HEK293 (cell line): ENCODE measurements at regions of chr3 and their contacts with region 1.

Region 1: DNA sequence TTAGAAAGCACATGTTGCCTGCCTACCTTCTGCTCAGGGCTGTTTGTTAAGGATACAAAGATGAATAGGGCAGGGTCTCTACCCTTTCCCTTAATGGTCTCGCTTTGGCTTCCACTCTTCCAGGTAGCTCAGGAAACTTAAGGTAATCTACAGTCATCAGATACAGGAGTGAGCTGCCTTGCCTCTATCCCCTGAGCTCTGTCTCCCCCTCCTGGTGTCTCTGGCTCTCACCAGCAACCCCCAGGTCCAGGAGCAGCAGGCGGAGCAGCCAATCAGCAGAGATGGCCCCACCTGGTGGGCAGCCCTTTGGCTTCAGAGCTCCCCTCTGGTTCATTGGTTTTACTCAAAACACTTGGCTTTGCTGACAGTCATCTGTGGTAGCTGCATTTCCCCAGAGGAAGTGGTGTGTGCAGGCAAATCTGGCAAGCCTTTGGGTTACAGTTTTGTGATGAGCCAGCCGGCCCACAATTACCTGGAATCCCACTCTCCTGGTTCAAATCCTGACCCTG is 8.5 kb upstream of the CX3CR1 start:
- H3K4me3 ChIP-seq: no peak overlapping the region
- H3K27ac ChIP-seq: no peak overlapping the region
- H3K4me1 ChIP-seq: no peaks in the 10 kb centered on the region
- CTCF ChIP-seq: peak; percentile 82

Region 2: DNA sequence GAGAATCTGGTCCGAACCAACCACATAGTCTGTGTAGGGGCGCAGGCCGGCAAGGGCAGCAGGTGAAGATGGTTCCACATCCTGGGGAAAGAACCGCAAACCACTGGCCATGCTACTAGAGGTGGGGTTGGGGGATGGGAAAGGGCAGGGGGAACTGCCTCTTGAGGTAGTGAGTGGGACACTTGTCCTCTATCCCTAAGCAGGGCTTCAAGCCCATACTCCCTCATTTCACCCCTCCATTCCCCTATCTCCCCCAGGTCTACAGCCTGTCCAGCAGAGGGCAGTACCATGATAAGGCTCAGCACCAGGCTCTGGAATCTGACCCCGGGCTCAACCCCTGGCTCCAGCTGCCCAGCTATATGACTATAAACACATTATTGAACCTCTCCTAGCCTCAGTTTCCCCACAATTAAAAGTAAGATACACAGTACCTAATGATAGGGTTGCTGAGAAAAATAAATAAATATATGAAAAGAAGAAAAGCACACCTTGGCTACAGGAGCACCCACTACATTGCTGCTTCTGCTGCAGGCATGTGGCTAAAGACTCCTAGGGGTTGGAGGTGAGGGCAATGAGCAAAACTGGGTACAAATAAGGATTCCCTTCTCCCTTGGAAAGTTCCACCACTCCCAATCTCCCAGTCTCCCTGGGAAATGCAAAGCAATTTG is 187.2 kb before region 1 on chr3:
- CTCF ChIA-PET with region 1: interaction called, 11 read pairs
- POLR2A ChIA-PET with region 1: no interaction called
- H3K4me3 ChIP-seq: no peak overlapping the region
- H3K27ac ChIP-seq: no peak overlapping the region
- H3K4me1 ChIP-seq: no peaks in the 10 kb centered on the region
- CTCF ChIP-seq: peak; percentile 31; the same call in 1 of the 2 replicates

Region 3: GRCh38 chr3:39115870-39116269 is 172.5 kb before region 1 on chr3:
- CTCF ChIA-PET with region 1: interaction called, 10 read pairs
- POLR2A ChIA-PET with region 1: interaction called, 3 read pairs
- H3K4me3 ChIP-seq: no peak overlapping the region
- H3K27ac ChIP-seq: no peak overlapping the region
- H3K4me1 ChIP-seq: no peaks in the 10 kb centered on the region
- CTCF ChIP-seq: no peak

Region 4: GRCh38 chr3:39189959-39190269 is 98.4 kb before region 1 on chr3:
- CTCF ChIA-PET with region 1: interaction called, 311 read pairs
- POLR2A ChIA-PET with region 1: interaction called, 6 read pairs
- H3K4me3 ChIP-seq: no peak overlapping the region
- H3K27ac ChIP-seq: no peak overlapping the region
- H3K4me1 ChIP-seq: no peaks in the 10 kb centered on the region
- CTCF ChIP-seq: peak; percentile 69; the same call in 1 of the 2 replicates

Region 5: DNA sequence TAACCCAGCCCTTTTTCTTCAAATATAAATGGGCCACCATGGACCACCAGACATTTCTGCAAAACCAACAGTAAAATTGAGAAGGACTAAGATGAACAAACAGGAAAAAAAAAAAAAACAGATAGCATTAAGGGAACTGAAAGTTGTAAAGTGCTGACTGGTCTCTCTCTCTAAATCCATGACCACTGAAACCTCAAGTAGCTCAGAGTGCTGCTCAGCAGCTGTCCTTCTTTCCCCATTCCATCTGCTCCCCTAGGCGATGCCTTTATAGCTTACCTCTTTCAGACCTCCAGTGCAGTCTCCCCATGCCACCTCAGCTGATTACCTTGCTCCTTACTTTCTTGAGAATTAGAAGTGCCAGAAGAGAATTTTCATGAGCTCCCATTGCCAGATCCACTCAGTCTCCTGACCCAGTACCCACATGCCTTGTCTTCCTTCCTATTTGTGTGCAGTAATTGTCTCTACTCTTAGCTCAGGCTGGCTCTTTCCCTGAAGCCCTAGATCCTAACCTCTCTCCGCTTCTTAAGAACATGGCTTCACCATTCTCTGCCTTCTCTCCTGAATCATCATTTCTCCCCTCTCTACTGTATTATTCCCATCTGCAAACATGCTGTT is 72.1 kb before region 1 on chr3:
- CTCF ChIA-PET with region 1: interaction called, 12 read pairs
- POLR2A ChIA-PET with region 1: no interaction called
- H3K4me3 ChIP-seq: no peak overlapping the region
- H3K27ac ChIP-seq: no peak overlapping the region
- H3K4me1 ChIP-seq: no peaks in the 10 kb centered on the region
- CTCF ChIP-seq: no peak

Region 6: GRCh38 chr3:39273119-39273518 is 15.2 kb before region 1 on chr3:
- CTCF ChIA-PET with region 1: interaction called, 69 read pairs
- POLR2A ChIA-PET with region 1: no interaction called
- H3K4me3 ChIP-seq: no peak overlapping the region
- H3K27ac ChIP-seq: no peak overlapping the region
- H3K4me1 ChIP-seq: no peaks in the 10 kb centered on the region
- CTCF ChIP-seq: no peak

Region 7: DNA sequence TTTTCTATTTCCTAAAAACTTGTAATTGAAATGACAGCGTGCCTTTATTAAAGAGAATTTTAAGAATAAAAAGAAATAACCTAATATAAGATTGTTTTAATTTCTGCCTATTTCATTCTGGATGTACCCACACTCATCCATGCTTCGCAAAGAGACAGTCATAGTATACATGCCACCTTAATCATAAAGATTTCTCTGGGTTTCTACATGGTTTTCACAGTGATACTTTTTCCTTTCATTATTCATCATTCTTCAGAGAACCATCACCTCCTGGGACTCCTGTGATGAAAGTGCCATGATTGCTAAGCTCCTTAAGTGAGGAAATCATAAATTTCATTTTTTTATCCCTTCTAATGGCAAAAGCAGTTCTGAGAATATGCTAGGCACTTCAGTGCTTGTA is 36.9 kb after region 1 on chr3:
- CTCF ChIA-PET with region 1: no interaction called
- POLR2A ChIA-PET with region 1: no interaction called
- H3K4me3 ChIP-seq: no peak overlapping the region
- H3K27ac ChIP-seq: no peak overlapping the region
- H3K4me1 ChIP-seq: no peaks in the 10 kb centered on the region
- CTCF ChIP-seq: no peak

Region 8: DNA sequence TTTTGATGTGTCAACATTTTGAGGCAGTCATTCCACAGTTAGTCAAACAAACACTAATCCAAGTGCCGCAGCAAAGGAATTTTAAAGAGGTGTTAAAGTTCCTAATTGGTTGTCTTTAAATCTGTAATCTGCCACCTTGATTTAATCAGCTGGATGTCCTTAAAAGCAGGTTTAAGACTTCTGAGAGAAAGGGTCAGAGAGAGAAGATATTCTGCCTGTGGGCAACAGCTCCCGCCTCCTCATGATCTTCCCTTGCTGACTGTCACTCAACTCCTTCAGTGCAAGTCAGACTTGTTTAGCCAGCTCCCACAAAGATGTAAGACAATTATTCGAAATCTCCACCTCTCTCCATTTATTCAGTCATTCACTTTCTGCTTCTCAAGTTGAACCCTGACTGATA is 428.5 kb after region 1 on chr3:
- CTCF ChIA-PET with region 1: no interaction called
- POLR2A ChIA-PET with region 1: no interaction called
- H3K4me3 ChIP-seq: no peak overlapping the region
- H3K27ac ChIP-seq: no peak overlapping the region
- H3K4me1 ChIP-seq: no peaks in the 10 kb centered on the region
- CTCF ChIP-seq: no peak